ENCODE measurements at regions of chr2 and their contacts with region 1.

Region 1: DNA sequence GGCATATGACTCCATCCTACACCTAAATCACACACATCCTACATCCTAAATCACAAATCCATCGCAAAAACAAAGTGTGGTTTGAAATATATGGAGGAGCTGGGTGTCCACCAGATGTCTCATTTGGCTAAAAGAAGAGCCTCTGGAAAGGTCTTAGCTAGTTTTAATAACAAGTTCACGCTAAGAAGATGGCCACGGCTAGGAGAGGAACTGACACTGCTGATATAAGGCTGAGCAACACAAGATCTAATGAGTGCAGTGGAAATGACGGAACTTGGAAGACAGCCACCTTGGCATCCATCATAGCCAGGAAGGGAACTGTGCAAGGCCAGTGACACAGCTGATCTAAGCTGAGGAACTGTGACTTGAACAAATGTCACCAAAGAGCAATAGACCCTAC is 60.0 kb upstream of the AGAP1 start:
- DNase-seq: peak; percentile 66 to 72
- ATAC-seq: peak; percentile 83 to 94 (median 89)
- H3K4me3 ChIP-seq: no peak overlapping the region
- H3K27ac ChIP-seq: peak overlapping the region; percentile 63
- H3K4me1 ChIP-seq: peaks cover 17% of the 10 kb centered on the region
- H3K27me3 ChIP-seq: peaks cover 0 to 3% (median 0%) of the 10 kb centered on the region in 3 donors
- CTCF ChIP-seq: peak; percentile 26

Region 2: DNA sequence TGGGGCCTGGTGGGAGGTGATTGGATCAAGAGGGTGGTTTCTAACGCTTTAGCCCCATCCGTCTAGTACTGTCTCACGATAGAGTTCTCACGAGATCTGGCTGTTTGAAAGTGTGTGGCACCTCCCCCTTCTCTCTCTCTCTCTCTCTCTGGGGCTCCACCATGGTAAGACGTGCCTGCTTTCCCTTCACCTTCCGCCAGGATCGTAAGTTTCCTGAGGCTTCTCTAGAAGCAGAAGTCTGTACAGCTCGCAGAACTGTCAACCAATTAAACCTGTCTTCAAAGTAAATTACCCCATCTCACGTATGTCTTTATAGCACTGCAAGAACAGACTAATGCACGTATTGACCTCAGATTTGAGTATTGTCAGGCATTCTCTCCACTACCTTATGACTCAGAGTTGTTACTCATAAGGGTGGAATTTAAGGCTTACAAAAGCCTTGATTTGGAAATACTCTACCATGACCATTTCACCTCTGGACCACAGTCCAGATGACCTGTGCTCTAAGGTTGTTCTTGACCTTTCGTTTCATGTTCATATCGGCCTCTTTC is 39.5 kb before region 1 on chr2:
- intact Hi-C with region 1: no loop called
- DNase-seq: no peak
- ATAC-seq: no peak
- H3K4me3 ChIP-seq: no peak overlapping the region
- H3K27ac ChIP-seq: no peak overlapping the region
- H3K4me1 ChIP-seq: no peaks in the 10 kb centered on the region
- H3K27me3 ChIP-seq: peaks cover 0 to 4% (median 2%) of the 10 kb centered on the region in 3 donors
- CTCF ChIP-seq: no peak

Region 3: GRCh38 chr2:235468978-235469655 is 35.3 kb after region 1 on chr2:
- intact Hi-C with region 1: loop called in 1 of 2 experiments (anchors 2 kb)
- DNase-seq: peak in 1 of 2 donors; percentile 18
- ATAC-seq: peak; percentile 95 to 98 (median 96)
- H3K4me3 ChIP-seq: no peak overlapping the region
- H3K27ac ChIP-seq: no peak overlapping the region
- H3K4me1 ChIP-seq: peaks cover 12% of the 10 kb centered on the region
- H3K27me3 ChIP-seq: peaks cover 0 to 3% (median 0%) of the 10 kb centered on the region in 3 donors
- CTCF ChIP-seq: no peak

Region 4: GRCh38 chr2:235746257-235747084 is 312.6 kb after region 1 on chr2:
- intact Hi-C with region 1: loop called in 1 of 2 experiments (anchors 10 kb)
- DNase-seq: peak in 1 of 2 donors; percentile 48
- ATAC-seq: peak; percentile 79 to 93 (median 89)
- H3K4me3 ChIP-seq: no peak overlapping the region
- H3K27ac ChIP-seq: no peak overlapping the region
- H3K4me1 ChIP-seq: peaks cover 16% of the 10 kb centered on the region
- H3K27me3 ChIP-seq: no peaks in the 10 kb centered on the region
- CTCF ChIP-seq: peak; percentile 79